ENCODE measurements at regions of chr6 and their contacts with region 1.

Region 1: GRCh38 chr6:166402582-166403277 is 20.0 kb upstream of the MPC1 start:
- DNase-seq: no peak
- H3K4me3 ChIP-seq: no peak overlapping the region
- H3K27ac ChIP-seq: no peak overlapping the region
- H3K4me1 ChIP-seq: no peaks in the 10 kb centered on the region
- H3K27me3 ChIP-seq: peaks cover 11% of the 10 kb centered on the region
- CTCF ChIP-seq: no peak

Region 2: GRCh38 chr6:166275714-166276166 is 127.0 kb before region 1 on chr6:
- intact Hi-C with region 1: loop called (anchors 5 kb)
- DNase-seq: peak; percentile 69
- H3K4me3 ChIP-seq: no peak overlapping the region
- H3K27ac ChIP-seq: no peak overlapping the region
- H3K4me1 ChIP-seq: no peaks in the 10 kb centered on the region
- H3K27me3 ChIP-seq: peaks cover 60% of the 10 kb centered on the region
- CTCF ChIP-seq: peak; percentile 99

Region 3: DNA sequence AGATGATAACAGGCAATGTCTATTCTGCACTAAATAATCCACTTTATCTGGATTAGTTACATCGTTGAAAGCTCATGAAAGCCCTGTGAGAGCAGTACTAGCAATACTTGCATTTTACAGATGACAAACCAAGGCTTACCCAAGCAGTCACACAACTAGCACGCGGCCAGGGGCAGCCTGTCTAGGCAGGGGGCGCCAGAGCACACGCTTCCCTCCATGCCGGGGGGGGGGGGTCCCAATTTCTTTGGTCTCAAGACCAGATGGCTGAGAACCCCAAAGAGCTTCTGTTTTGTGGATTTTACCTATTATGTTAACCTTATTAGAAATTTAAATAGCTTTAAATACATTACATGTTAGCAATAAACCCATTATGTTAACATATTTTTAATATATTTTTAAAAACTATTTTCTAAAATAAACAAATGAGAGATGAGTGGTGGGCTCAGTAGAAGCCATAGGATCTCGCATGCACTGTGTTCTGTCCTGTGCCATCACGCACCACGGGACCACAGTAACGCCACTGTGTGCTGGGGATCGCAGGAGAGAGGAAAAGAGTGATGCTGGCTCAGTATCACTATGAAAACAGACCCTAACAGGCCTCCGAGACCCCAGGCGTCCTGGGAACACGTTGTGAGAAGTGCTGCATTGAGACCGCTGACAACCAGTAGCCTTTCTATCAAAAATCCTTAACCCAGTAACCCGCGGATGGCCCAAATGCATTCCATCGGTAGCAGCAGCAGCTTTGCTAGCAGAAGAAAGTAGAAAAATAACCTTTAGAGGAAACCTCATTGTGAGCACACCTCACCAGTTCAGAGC is 89.3 kb before region 1 on chr6:
- intact Hi-C with region 1: loop called (anchors 10 kb)
- DNase-seq: no peak
- H3K4me3 ChIP-seq: no peak overlapping the region
- H3K27ac ChIP-seq: no peak overlapping the region
- H3K4me1 ChIP-seq: peaks cover 3% of the 10 kb centered on the region
- H3K27me3 ChIP-seq: peaks cover 22% of the 10 kb centered on the region
- CTCF ChIP-seq: peak; percentile 79